Colonic mucosa (tissue), 4 donors: ENCODE measurements at regions of chr14 and their contacts with region 1.

Region 1: GRCh38 chr14:64636208-64636979 is 67.8 kb upstream of the PLEKHG3 start:
- DNase-seq: peak; percentile 81
- H3K4me3 ChIP-seq: no peak overlapping the region
- H3K27ac ChIP-seq: no peak overlapping the region
- H3K4me1 ChIP-seq: no peaks in the 10 kb centered on the region
- H3K27me3 ChIP-seq: no peaks in the 10 kb centered on the region
- CTCF ChIP-seq: peak; percentile 89

Region 2: DNA sequence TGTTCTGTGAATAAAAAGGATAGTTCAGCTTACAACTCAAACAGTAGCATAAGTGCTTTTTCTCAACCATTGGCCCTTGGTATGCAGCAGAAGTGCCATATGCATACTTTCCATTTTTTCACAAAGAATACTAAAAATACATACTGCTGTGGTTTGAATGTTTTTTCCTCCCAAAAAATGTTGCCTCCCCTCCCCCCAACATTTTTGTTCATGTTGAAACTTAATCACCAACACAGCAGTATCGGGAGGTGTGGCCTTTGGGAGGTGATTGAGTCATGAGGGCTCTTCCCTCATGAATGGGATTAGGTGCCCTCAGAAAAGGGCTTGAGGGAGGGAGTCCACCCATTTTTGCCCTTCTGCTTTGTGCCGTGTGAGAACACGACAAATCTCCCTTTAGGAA is 540.8 kb before region 1 on chr14:
- intact Hi-C with region 1: no loop called
- DNase-seq: no peak
- H3K4me3 ChIP-seq: no peak overlapping the region
- H3K27ac ChIP-seq: no peak overlapping the region
- H3K4me1 ChIP-seq: peaks cover 8% of the 10 kb centered on the region
- H3K27me3 ChIP-seq: no peaks in the 10 kb centered on the region
- CTCF ChIP-seq: no peak

Region 3: DNA sequence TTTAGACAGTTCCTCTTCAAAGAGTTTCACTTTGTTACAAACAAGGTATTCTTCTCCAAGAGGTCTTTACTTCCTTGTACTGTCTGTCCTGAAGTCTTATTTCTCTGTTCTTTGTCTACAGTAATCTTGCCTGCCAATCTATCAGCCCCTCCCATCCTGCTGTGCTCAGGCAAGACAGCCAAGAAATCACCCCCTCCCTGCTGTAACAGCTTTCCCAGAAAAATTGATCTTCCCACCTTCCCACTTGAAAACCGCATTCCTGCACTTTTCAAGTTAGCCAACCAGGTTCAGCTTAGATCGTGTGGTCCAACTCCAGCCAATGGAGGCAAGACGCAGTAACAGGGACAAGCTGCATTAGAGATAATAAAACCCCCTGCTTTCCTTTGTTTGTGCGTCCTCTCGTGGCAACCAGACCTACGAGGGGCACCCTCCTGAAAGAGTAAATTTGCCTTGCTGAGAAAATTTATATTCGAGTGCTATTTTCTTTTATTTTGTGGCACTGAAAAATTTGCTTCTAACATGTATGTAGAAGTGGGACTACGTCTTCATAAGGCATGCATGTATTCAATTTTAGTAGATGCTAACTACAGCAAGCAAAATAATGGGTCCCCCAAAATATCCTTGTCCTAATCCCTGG is 295.7 kb before region 1 on chr14:
- intact Hi-C with region 1: loop called (anchors 10 kb)
- DNase-seq: no peak
- H3K4me3 ChIP-seq: no peak overlapping the region
- H3K27ac ChIP-seq: no peak overlapping the region
- H3K4me1 ChIP-seq: no peaks in the 10 kb centered on the region
- H3K27me3 ChIP-seq: no peaks in the 10 kb centered on the region
- CTCF ChIP-seq: no peak

Region 4: DNA sequence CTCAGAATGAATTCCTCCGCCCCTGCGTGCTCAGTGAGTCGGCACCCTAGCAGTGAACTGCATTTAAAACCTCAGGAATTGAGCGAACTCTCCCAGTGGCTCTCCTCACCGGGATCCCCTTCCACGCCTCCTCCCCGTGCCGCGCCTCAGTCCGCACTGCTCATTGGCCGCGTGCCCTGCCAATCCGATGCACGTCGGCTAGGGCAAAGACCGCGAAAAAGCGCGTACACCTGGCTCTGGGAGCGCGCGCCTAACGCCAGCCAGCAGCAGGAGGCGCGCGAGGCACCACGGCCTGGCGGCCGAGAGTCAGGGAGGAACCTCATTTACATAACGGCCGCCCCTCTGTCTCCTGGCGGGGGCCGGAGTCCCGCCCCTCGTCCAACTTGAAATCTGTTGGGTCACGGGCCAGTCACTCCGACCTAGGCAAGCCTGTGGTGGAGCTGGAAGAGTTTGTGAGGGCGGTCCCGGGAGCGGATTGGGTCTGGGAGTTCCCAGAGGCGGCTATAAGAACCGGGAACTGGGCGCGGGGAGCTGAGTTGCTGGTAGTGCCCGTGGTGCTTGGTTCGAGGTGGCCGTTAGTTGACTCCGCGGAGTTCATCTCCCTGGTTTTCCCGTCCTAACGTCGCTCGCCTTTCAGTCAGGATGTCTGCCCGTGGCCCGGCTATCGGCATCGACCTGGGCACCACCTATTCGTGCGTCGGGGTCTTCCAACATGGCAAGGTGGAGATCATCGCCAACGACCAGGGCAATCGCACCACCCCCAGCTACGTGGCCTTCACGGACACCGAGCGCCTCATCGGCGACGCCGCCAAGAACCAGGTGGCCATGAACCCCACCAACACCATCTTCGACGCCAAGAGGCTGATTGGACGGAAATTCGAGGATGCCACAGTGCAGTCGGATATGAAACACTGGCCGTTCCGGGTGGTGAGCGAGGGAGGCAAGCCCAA is 95.9 kb before region 1 on chr14 and contains the start of gene HSPA2:
- intact Hi-C with region 1: loop called (anchors 2 kb)
- DNase-seq: peak; percentile 99
- H3K4me3 ChIP-seq: peak within 1 kb of the TSS; percentile 65
- H3K27ac ChIP-seq: peak within 1 kb of the TSS; percentile 94
- H3K4me1 ChIP-seq: no peaks in the 10 kb centered on the region
- H3K27me3 ChIP-seq: no peaks in the 10 kb centered on the region
- CTCF ChIP-seq: peak; percentile 87
- total RNA-seq, gene HSPA2: 21.6 to 66.1 TPM

Region 5: GRCh38 chr14:64971943-64972791 is 335.8 kb after region 1 on chr14 and contains the start of gene RAB15:
- intact Hi-C with region 1: no loop called
- DNase-seq: peak; percentile 45
- H3K4me3 ChIP-seq: peak within 1 kb of the TSS; percentile 72
- H3K27ac ChIP-seq: peak within 1 kb of the TSS; percentile 19
- H3K4me1 ChIP-seq: no peaks in the 10 kb centered on the region
- H3K27me3 ChIP-seq: no peaks in the 10 kb centered on the region
- CTCF ChIP-seq: no peak
- total RNA-seq, gene RAB15: 33.3 to 43.8 TPM